ENCODE measurements at regions of chr12 and their contacts with region 1.

Region 1: GRCh38 chr12:52023182-52023975 is 16.6 kb downstream of the TAMALIN start:
- DNase-seq: peak; percentile 80 to 95 (median 90)
- ATAC-seq: peak; percentile 59 to 63
- H3K4me3 Mint-ChIP-seq: peak overlapping the region; percentile 79 to 97 (median 88)
- H3K27ac Mint-ChIP-seq: peak overlapping the region in 9 of 10 donors; percentile 82 to 97 (median 92)
- H3K4me1 Mint-ChIP-seq: peaks cover 26 to 49% (median 45%) of the 10 kb centered on the region in 4 donors
- H3K27me3 Mint-ChIP-seq: no peaks in the 10 kb centered on the region

Region 2: GRCh38 chr12:51994959-51995358 is 28.4 kb before region 1 on chr12:
- POLR2A ChIA-PET with region 1: interaction called, 32 read pairs
- DNase-seq: no peak
- ATAC-seq: no peak
- H3K4me3 Mint-ChIP-seq: no peak overlapping the region
- H3K27ac Mint-ChIP-seq: peak overlapping the region in 1 of 10 donors; percentile 40
- H3K4me1 Mint-ChIP-seq: peaks cover 2 to 12% (median 7%) of the 10 kb centered on the region in 4 donors
- H3K27me3 Mint-ChIP-seq: no peaks in the 10 kb centered on the region

Region 3: GRCh38 chr12:52004042-52004648 is 19.2 kb before region 1 on chr12:
- POLR2A ChIA-PET with region 1: interaction called, 153 read pairs
- DNase-seq: no peak
- ATAC-seq: no peak
- H3K4me3 Mint-ChIP-seq: no peak overlapping the region
- H3K27ac Mint-ChIP-seq: peak overlapping the region in 2 of 10 donors; percentile 15 to 28
- H3K4me1 Mint-ChIP-seq: peaks cover 15 to 31% (median 28%) of the 10 kb centered on the region in 4 donors
- H3K27me3 Mint-ChIP-seq: no peaks in the 10 kb centered on the region

Region 4: GRCh38 chr12:52050761-52051541 is 27.6 kb after region 1 on chr12 and contains the start of gene NR4A1:
- POLR2A ChIA-PET with region 1: interaction called, 15 read pairs
- DNase-seq: peak; percentile 96 to 100 (median 99)
- ATAC-seq: peak; percentile 87 to 89
- H3K4me3 Mint-ChIP-seq: peak within 1 kb of the TSS; percentile 91 to 98 (median 94)
- H3K27ac Mint-ChIP-seq: peak within 1 kb of the TSS; percentile 89 to 100 (median 99)
- H3K4me1 Mint-ChIP-seq: peaks cover 23 to 47% (median 43%) of the 10 kb centered on the region in 4 donors
- H3K27me3 Mint-ChIP-seq: peaks cover 0 to 10% (median 6%) of the 10 kb centered on the region in 5 donors
- polyA plus RNA-seq, gene NR4A1: 0.39 to 0.79 (median 0.45) TPM

Region 5: DNA sequence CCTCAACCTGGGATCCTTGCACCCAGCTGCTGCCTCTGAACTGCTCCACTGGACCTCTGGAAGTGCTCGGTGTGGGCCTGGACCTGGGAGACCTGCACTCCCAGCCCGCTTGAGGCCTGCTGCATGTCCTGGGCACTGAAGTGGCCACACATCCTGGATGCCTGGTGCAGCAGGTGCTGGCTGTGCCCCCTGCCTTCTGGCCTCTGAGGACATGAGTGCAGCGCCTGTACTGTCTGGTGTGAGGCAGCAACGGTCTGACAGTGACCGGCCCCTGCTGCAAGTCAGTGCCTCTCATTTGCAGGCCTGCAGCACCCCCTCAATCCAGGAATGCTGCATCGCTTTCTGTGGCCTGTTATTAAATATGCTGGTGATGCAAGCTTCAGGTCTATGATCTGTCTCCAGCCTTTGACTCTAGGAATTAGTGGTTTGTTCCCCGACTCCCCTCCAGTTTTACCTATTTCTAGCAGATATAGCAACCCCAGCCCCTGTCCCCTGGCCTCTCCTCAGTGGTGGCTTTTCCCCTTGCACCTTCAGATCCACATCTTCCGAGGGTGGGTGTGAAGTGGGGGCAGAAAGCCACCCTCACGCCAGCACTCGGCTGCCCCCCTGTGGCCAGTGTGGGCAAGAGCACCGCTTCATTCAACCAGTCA is 59.7 kb after region 1 on chr12:
- POLR2A ChIA-PET with region 1: interaction called, 29 read pairs
- DNase-seq: peak; percentile 55 to 82 (median 72)
- ATAC-seq: peak; percentile 84 to 90
- H3K4me3 Mint-ChIP-seq: peak overlapping the region in 2 of 10 donors; percentile 19 to 71
- H3K27ac Mint-ChIP-seq: peak overlapping the region in 7 of 10 donors; percentile 10 to 81 (median 55)
- H3K4me1 Mint-ChIP-seq: peaks cover 10 to 27% (median 15%) of the 10 kb centered on the region in 4 donors
- H3K27me3 Mint-ChIP-seq: peaks cover 3 to 11% (median 8%) of the 10 kb centered on the region in 5 donors